ENCODE measurements at regions of chr16 and their contacts with region 1.

Region 1: GRCh38 chr16:68040507-68041288 is 17.6 kb downstream of the DUS2 start:
- H3K4me3 Mint-ChIP-seq: no peak overlapping the region
- H3K27ac Mint-ChIP-seq: peak overlapping the region; percentile 62
- H3K4me1 Mint-ChIP-seq: peaks cover 53% of the 10 kb centered on the region
- H3K27me3 Mint-ChIP-seq: no peaks in the 10 kb centered on the region

Region 2: DNA sequence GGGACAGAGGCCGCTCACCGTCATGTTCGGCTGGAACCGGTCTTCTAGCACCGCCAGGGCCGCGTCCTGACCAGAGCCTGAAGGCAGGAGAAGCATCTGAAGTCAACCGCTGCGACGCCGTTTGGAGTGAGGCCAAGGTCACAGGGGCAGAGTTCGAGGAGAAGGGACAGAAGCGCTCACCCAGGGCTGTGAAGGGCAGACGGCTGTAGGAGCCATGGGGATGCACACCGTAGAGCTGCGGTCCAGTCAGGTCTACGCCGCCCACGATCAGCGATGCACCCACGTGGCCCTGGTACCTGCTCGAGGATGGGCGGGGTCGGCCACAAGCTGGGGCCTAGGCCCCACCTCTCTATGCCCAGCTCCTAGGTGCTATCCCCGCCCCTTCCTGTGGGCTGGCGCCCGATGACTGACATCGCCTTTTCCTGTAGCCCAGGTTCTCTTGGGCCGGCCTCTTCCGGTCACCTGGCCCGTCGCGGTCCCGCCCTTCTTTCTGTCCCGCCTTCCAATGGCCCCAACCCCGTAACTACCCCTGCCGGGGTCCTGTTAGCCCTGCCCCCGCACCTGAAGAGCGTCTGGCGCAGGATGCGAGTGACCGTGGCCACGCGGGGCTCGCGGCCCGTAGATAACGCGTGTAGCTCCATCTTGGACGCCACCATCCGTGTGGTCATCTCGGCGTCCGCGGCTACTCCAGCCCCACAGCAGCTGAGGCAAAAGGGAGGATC is 105.1 kb before region 1 on chr16:
- intact Hi-C with region 1: loop called (anchors 5 kb)
- H3K4me3 Mint-ChIP-seq: peak overlapping the region; percentile 83
- H3K27ac Mint-ChIP-seq: peak overlapping the region; percentile 91
- H3K4me1 Mint-ChIP-seq: peaks cover 37% of the 10 kb centered on the region
- H3K27me3 Mint-ChIP-seq: no peaks in the 10 kb centered on the region

Region 3: GRCh38 chr16:68155425-68155824 is 114.7 kb after region 1 on chr16:
- intact Hi-C with region 1: no loop called
- H3K4me3 Mint-ChIP-seq: no peak overlapping the region
- H3K27ac Mint-ChIP-seq: no peak overlapping the region
- H3K4me1 Mint-ChIP-seq: no peaks in the 10 kb centered on the region
- H3K27me3 Mint-ChIP-seq: no peaks in the 10 kb centered on the region

Region 4: GRCh38 chr16:68214726-68215125 is 174.0 kb after region 1 on chr16:
- intact Hi-C with region 1: no loop called
- H3K4me3 Mint-ChIP-seq: no peak overlapping the region
- H3K27ac Mint-ChIP-seq: no peak overlapping the region
- H3K4me1 Mint-ChIP-seq: peaks cover 21% of the 10 kb centered on the region
- H3K27me3 Mint-ChIP-seq: no peaks in the 10 kb centered on the region

Measured in dendritic cell treated with granulocyte-macrophage colony-stimulating factor and Interleukin-4, amounts not matched to agents 40 ng/mL and 50 ng/mL, for 4 days (primary cell).